ENCODE measurements at regions of chr1 and their contacts with region 1.

Region 1: DNA sequence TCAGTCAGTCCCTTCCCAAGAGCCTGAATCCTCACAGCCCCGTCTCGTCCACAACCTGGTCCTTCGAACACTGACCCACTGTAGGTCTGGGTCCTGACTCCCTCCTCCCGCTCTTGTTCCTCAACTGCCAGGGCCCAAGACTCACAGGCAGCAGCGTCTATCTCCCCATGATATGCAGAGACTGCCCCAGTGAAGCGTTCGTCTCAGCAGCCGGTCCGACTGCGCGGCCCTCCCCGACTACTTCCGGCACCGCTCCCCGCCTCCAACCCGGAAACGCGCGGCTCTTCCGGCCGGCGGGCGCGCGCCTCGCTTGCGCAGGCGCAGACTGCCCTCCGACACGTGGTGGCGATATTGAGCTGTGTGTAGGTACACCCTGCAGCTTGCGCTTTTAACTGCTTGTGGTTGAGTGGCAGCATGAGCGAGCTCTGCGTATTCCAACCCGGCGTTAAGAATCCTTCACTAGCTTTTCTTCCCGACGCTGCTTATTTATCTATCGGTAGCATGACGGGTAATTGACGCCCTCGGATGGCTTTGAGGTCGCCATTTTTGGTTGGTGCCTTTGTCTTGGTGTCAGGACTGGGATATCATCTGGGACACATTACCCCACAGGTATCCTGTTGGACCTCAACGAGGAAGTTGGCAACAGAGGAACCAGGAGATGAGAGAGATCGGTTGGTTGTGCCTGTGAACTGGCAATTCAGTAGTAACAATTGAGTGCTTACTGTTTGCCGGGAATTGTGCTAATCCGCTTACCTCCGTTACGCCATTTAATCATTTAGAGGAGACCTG is at the start of gene TAF12:
- DNase-seq: peak; percentile 87 to 98 (median 92)
- ATAC-seq: peak; percentile 81
- H3K4me3 ChIP-seq: peak within 1 kb of the TSS; percentile 99
- H3K4me3 Mint-ChIP-seq: peak within 1 kb of the TSS; percentile 92
- H3K27ac ChIP-seq: peak within 1 kb of the TSS; percentile 94
- H3K27ac Mint-ChIP-seq: peak within 1 kb of the TSS; percentile 97
- H3K4me1 ChIP-seq: peaks cover 54% of the 10 kb centered on the region
- H3K4me1 Mint-ChIP-seq: peaks cover 62% of the 10 kb centered on the region
- H3K27me3 ChIP-seq: no peaks in the 10 kb centered on the region
- H3K27me3 Mint-ChIP-seq: no peaks in the 10 kb centered on the region
- CTCF ChIP-seq: peak; percentile 63
- total RNA-seq, gene TAF12: 7.0 to 8.0 TPM

Region 2: GRCh38 chr1:28088168-28088961 is 554.7 kb before region 1 on chr1 and contains the start of gene EYA3:
- CTCF ChIA-PET with region 1: no interaction called
- POLR2A ChIA-PET with region 1: no interaction called
- intact Hi-C with region 1: loop called in 1 of 2 experiments (anchors 2 kb)
- DNase-seq: peak; percentile 97 to 100 (median 99)
- ATAC-seq: peak; percentile 92
- H3K4me3 ChIP-seq: peak within 1 kb of the TSS; percentile 81
- H3K4me3 Mint-ChIP-seq: peak within 1 kb of the TSS; percentile 97
- H3K27ac ChIP-seq: peak within 1 kb of the TSS; percentile 69 to 86
- H3K27ac Mint-ChIP-seq: peak within 1 kb of the TSS; percentile 79
- H3K4me1 ChIP-seq: peaks cover 22% of the 10 kb centered on the region
- H3K4me1 Mint-ChIP-seq: peaks cover 42% of the 10 kb centered on the region
- H3K27me3 ChIP-seq: no peaks in the 10 kb centered on the region
- H3K27me3 Mint-ChIP-seq: no peaks in the 10 kb centered on the region
- CTCF ChIP-seq: no peak
- total RNA-seq, gene EYA3: 5.7 to 6.4 TPM

Region 3: GRCh38 chr1:28505406-28506187 is 137.4 kb before region 1 on chr1 and contains the start of gene RCC1:
- CTCF ChIA-PET with region 1: no interaction called
- POLR2A ChIA-PET with region 1: interaction called, 18 read pairs
- intact Hi-C with region 1: loop called (anchors 1 to 5 kb)
- DNase-seq: peak; percentile 86 to 99 (median 92)
- ATAC-seq: peak; percentile 92
- H3K4me3 ChIP-seq: peak within 1 kb of the TSS; percentile 86
- H3K4me3 Mint-ChIP-seq: peak within 1 kb of the TSS; percentile 94
- H3K27ac ChIP-seq: peak within 1 kb of the TSS; percentile 65 to 79
- H3K27ac Mint-ChIP-seq: peak within 1 kb of the TSS; percentile 88
- H3K4me1 ChIP-seq: peaks cover 38% of the 10 kb centered on the region
- H3K4me1 Mint-ChIP-seq: peaks cover 49% of the 10 kb centered on the region
- H3K27me3 ChIP-seq: no peaks in the 10 kb centered on the region
- H3K27me3 Mint-ChIP-seq: no peaks in the 10 kb centered on the region
- CTCF ChIP-seq: no peak
- total RNA-seq, gene RCC1: 8.5 to 9.9 TPM

Region 4: GRCh38 chr1:28552758-28553663 is 90.0 kb before region 1 on chr1 and contains the start of gene TRNAU1AP:
- CTCF ChIA-PET with region 1: no interaction called
- POLR2A ChIA-PET with region 1: interaction called, 10 read pairs
- intact Hi-C with region 1: no loop called
- DNase-seq: peak; percentile 94 to 99 (median 96)
- ATAC-seq: peak; percentile 95
- H3K4me3 ChIP-seq: peak within 1 kb of the TSS; percentile 84
- H3K4me3 Mint-ChIP-seq: peak within 1 kb of the TSS; percentile 99
- H3K27ac ChIP-seq: peak within 1 kb of the TSS; percentile 66 to 68
- H3K27ac Mint-ChIP-seq: peak within 1 kb of the TSS; percentile 99
- H3K4me1 ChIP-seq: peaks cover 22% of the 10 kb centered on the region
- H3K4me1 Mint-ChIP-seq: peaks cover 31% of the 10 kb centered on the region
- H3K27me3 ChIP-seq: no peaks in the 10 kb centered on the region
- H3K27me3 Mint-ChIP-seq: no peaks in the 10 kb centered on the region
- CTCF ChIP-seq: no peak
- total RNA-seq, gene TRNAU1AP: 21.4 to 24.2 TPM

Region 5: GRCh38 chr1:28668191-28668955 is 25.3 kb after region 1 on chr1 and contains the start of gene GMEB1:
- CTCF ChIA-PET with region 1: interaction called, 19 read pairs
- POLR2A ChIA-PET with region 1: interaction called, 198 read pairs
- intact Hi-C with region 1: loop called (anchors 1 kb)
- DNase-seq: peak; percentile 67 to 93 (median 82)
- ATAC-seq: peak; percentile 60
- H3K4me3 ChIP-seq: peak within 1 kb of the TSS; percentile 99
- H3K4me3 Mint-ChIP-seq: peak within 1 kb of the TSS; percentile 100
- H3K27ac ChIP-seq: peak within 1 kb of the TSS; percentile 96 to 97
- H3K27ac Mint-ChIP-seq: peak within 1 kb of the TSS; percentile 100
- H3K4me1 ChIP-seq: peaks cover 35% of the 10 kb centered on the region
- H3K4me1 Mint-ChIP-seq: peaks cover 24% of the 10 kb centered on the region
- H3K27me3 ChIP-seq: no peaks in the 10 kb centered on the region
- H3K27me3 Mint-ChIP-seq: no peaks in the 10 kb centered on the region
- CTCF ChIP-seq: no peak
- total RNA-seq, gene GMEB1: 9.0 to 11.8 TPM

Region 6: GRCh38 chr1:28756846-28757245 is 113.8 kb after region 1 on chr1:
- CTCF ChIA-PET with region 1: interaction called, 3 read pairs
- POLR2A ChIA-PET with region 1: interaction called, 4 read pairs
- intact Hi-C with region 1: loop called in 1 of 2 experiments (anchors 5 kb)
- DNase-seq: peak in 4 of 14 experiments; percentile 17 to 45 (median 28)
- ATAC-seq: peak; percentile 56
- H3K4me3 ChIP-seq: no peak overlapping the region
- H3K4me3 Mint-ChIP-seq: no peak overlapping the region
- H3K27ac ChIP-seq: no peak overlapping the region
- H3K27ac Mint-ChIP-seq: no peak overlapping the region
- H3K4me1 ChIP-seq: peaks cover 29% of the 10 kb centered on the region
- H3K4me1 Mint-ChIP-seq: peaks cover 37% of the 10 kb centered on the region
- H3K27me3 ChIP-seq: no peaks in the 10 kb centered on the region
- H3K27me3 Mint-ChIP-seq: no peaks in the 10 kb centered on the region
- CTCF ChIP-seq: peak; percentile 34

Region 7: DNA sequence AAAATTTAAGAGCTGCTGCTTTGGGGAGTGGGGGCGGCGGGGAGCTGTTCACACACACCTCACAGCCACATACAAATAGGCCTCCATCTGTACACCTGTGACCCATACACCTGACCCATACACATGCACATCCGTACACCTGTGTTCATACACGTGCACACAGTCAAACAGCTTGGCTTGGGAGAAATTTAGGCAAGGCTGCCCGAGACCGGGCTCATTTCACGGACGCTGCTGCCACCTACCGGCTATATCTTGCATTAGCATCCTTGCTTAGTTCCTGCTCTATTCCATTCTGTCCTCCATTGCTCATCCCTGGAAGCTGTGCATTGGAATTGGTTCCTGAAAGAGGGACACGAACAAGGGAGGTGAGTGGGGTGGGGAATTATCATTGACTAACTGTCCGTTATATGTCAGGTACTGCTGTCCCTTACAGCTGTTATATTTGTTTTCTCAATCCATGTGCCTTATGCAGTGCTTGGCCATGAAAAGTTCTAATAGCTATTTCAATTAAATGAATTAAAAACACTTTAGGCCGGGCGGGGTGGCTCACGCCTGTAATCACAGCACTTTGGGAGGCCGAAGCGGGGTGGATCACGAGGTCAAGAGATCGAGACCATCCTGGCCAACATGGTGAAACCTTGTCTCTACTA is 234.2 kb after region 1 on chr1:
- CTCF ChIA-PET with region 1: interaction called, 13 read pairs
- POLR2A ChIA-PET with region 1: interaction called, 6 read pairs
- intact Hi-C with region 1: loop called (anchors 1 to 2 kb)
- DNase-seq: peak; percentile 61 to 88 (median 72)
- ATAC-seq: peak; percentile 84
- H3K4me3 ChIP-seq: no peak overlapping the region
- H3K4me3 Mint-ChIP-seq: no peak overlapping the region
- H3K27ac ChIP-seq: no peak overlapping the region
- H3K27ac Mint-ChIP-seq: no peak overlapping the region
- H3K4me1 ChIP-seq: peaks cover 11% of the 10 kb centered on the region
- H3K4me1 Mint-ChIP-seq: peaks cover 7% of the 10 kb centered on the region
- H3K27me3 ChIP-seq: peaks cover 0 to 2% of the 10 kb centered on the region in 2 experiments
- H3K27me3 Mint-ChIP-seq: no peaks in the 10 kb centered on the region
- CTCF ChIP-seq: peak; percentile 97

Region 8: GRCh38 chr1:29256979-29257804 is 614.2 kb after region 1 on chr1:
- CTCF ChIA-PET with region 1: no interaction called
- POLR2A ChIA-PET with region 1: no interaction called
- intact Hi-C with region 1: no loop called
- DNase-seq: no peak
- ATAC-seq: no peak
- H3K4me3 ChIP-seq: no peak overlapping the region
- H3K4me3 Mint-ChIP-seq: no peak overlapping the region
- H3K27ac ChIP-seq: no peak overlapping the region
- H3K27ac Mint-ChIP-seq: no peak overlapping the region
- H3K4me1 ChIP-seq: peaks cover 14% of the 10 kb centered on the region
- H3K4me1 Mint-ChIP-seq: peaks cover 4% of the 10 kb centered on the region
- H3K27me3 ChIP-seq: peaks cover 32 to 35% of the 10 kb centered on the region in 2 experiments
- H3K27me3 Mint-ChIP-seq: peaks cover 33% of the 10 kb centered on the region
- CTCF ChIP-seq: no peak

Measured in CD4-positive, alpha-beta T cell (primary cell).